Sigmoid colon (tissue), 7 donors: ENCODE measurements at regions of chr3 and their contacts with region 1.

Region 1: GRCh38 chr3:64554081-64554920 is 133.5 kb downstream of the ADAMTS9 start:
- DNase-seq: no peak
- H3K4me3 ChIP-seq: no peak overlapping the region
- H3K27ac ChIP-seq: peak overlapping the region in 1 of 4 donors; percentile 45
- H3K4me1 ChIP-seq: peaks cover 0 to 40% (median 19%) of the 10 kb centered on the region in 4 donors
- H3K27me3 ChIP-seq: no peaks in the 10 kb centered on the region
- CTCF ChIP-seq: no peak
- EP300 ChIP-seq: no peak
- POLR2A ChIP-seq: no peak

Region 2: DNA sequence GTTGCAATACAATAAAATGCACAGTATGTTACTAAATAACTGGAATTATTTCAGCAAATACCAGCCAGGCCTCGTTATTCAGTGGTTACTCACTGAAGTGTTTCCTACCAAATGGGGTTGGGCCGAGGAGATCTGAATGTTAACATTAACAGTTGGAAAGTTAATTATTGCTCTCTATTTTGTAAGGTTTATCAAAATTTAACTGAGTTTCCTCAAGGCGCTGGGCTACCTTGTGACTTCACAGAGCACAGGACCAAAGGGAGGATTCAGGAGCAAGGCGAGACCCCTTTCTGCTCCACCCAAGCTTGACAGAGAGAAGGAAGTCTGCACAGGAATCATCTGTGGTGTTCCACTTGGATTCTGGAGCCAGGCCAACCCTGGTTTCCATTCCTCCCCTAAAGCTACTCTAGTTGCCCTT is 111.9 kb after region 1 on chr3:
- intact Hi-C with region 1: loop called (anchors 5 kb)
- DNase-seq: no peak
- H3K4me3 ChIP-seq: no peak overlapping the region
- H3K27ac ChIP-seq: peak overlapping the region; percentile 74 to 82 (median 76)
- H3K4me1 ChIP-seq: peaks cover 0 to 63% (median 54%) of the 10 kb centered on the region in 4 donors
- H3K27me3 ChIP-seq: no peaks in the 10 kb centered on the region
- CTCF ChIP-seq: no peak
- EP300 ChIP-seq: no peak
- POLR2A ChIP-seq: no peak